WTC11 (cell line): ENCODE measurements at regions of chr5 and their contacts with region 1.

Region 1: GRCh38 chr5:157142317-157143126 is at the start of gene MED7:
- DNase-seq: peak; percentile 91
- ATAC-seq: peak; percentile 100
- H3K4me3 Mint-ChIP-seq: peak within 1 kb of the TSS; percentile 92
- H3K27ac Mint-ChIP-seq: peak within 1 kb of the TSS; percentile 96
- H3K4me1 Mint-ChIP-seq: peaks cover 5% of the 10 kb centered on the region; the same call in 1 of the 2 replicates
- H3K27me3 Mint-ChIP-seq: no peaks in the 10 kb centered on the region; the same call in 1 of the 2 replicates
- CTCF ChIP-seq: no peak
- total RNA-seq, gene MED7: 11.1 to 11.4 TPM (median 11.2 TPM) in 3 replicates

Region 2: GRCh38 chr5:156913719-156914370 is 228.7 kb before region 1 on chr5:
- CTCF ChIA-PET with region 1: interaction called, 3 read pairs
- POLR2A ChIA-PET with region 1: interaction called, 10 read pairs
- DNase-seq: peak; percentile 59
- ATAC-seq: peak; percentile 91
- H3K4me3 Mint-ChIP-seq: peak overlapping the region; percentile 43; the same call in 1 of the 2 replicates
- H3K27ac Mint-ChIP-seq: peak overlapping the region; percentile 99
- H3K4me1 Mint-ChIP-seq: peaks cover 73% of the 10 kb centered on the region
- H3K27me3 Mint-ChIP-seq: peaks cover 7% of the 10 kb centered on the region; the same call in 1 of the 2 replicates
- CTCF ChIP-seq: no peak

Region 3: GRCh38 chr5:157059093-157059539 is 83.4 kb before region 1 on chr5 and contains the start of gene HAVCR1:
- CTCF ChIA-PET with region 1: no interaction called
- POLR2A ChIA-PET with region 1: no interaction called
- DNase-seq: no peak
- ATAC-seq: no peak
- H3K4me3 Mint-ChIP-seq: no peak within 1 kb of the TSS
- H3K27ac Mint-ChIP-seq: no peak within 1 kb of the TSS
- H3K4me1 Mint-ChIP-seq: no peaks in the 10 kb centered on the region
- H3K27me3 Mint-ChIP-seq: no peaks in the 10 kb centered on the region
- CTCF ChIP-seq: no peak
- total RNA-seq, gene HAVCR1: not detected in 3 replicates

Region 4: DNA sequence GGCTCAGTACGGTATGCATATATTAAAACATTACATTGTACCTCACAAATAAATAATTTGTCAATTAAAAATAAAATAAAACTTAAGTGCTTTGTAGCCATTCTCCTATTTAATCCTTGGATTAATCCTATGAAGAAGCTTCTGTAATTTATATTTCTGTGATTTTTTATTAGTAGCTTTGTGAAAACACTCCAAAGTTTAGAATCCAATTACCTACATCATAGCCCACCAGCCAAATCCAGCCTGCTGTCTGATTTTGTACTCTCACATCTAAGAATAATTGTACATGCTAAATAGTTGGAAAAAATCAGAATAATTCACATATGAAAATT is 10.3 kb before region 1 on chr5:
- CTCF ChIA-PET with region 1: interaction called, 3 read pairs
- POLR2A ChIA-PET with region 1: interaction called, 12 read pairs
- DNase-seq: no peak
- ATAC-seq: no peak
- H3K4me3 Mint-ChIP-seq: no peak overlapping the region
- H3K27ac Mint-ChIP-seq: no peak overlapping the region
- H3K4me1 Mint-ChIP-seq: peaks cover 13% of the 10 kb centered on the region
- H3K27me3 Mint-ChIP-seq: no peaks in the 10 kb centered on the region
- CTCF ChIP-seq: no peak; the same call in 1 of the 2 replicates

Region 5: DNA sequence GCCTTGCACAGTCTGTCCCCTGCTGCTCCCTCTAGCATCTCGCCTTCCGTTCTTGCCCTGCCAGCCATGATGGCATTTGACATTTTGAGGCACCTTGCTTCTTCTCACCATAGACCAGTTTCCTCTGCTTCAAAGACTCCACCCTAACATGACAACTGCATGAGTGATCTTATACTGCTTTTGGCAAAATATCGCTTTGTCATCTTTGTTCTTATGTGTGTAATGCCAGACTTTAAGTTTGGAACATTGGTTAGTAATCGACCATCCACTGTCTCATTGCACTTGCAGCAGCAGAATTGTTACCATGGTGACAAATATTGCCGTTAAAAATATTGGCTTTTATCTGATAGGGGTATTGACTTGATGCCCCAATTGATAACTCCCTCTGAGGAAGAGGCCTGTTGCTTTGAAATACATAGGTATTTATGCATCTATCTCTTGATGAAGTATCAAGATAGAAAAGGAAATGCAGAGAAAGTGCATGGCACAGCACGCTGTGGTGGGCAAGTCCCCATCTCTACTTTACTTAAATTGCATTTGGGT is 16.8 kb after region 1 on chr5:
- CTCF ChIA-PET with region 1: no interaction called
- POLR2A ChIA-PET with region 1: no interaction called
- DNase-seq: no peak
- ATAC-seq: no peak
- H3K4me3 Mint-ChIP-seq: no peak overlapping the region
- H3K27ac Mint-ChIP-seq: no peak overlapping the region
- H3K4me1 Mint-ChIP-seq: no peaks in the 10 kb centered on the region
- H3K27me3 Mint-ChIP-seq: no peaks in the 10 kb centered on the region
- CTCF ChIP-seq: no peak